Activated B cell treated with CpG ODN at 0.5 μM for 24 hours (primary cell): ENCODE measurements at regions of chr18 and their contacts with region 1.

Region 1: DNA sequence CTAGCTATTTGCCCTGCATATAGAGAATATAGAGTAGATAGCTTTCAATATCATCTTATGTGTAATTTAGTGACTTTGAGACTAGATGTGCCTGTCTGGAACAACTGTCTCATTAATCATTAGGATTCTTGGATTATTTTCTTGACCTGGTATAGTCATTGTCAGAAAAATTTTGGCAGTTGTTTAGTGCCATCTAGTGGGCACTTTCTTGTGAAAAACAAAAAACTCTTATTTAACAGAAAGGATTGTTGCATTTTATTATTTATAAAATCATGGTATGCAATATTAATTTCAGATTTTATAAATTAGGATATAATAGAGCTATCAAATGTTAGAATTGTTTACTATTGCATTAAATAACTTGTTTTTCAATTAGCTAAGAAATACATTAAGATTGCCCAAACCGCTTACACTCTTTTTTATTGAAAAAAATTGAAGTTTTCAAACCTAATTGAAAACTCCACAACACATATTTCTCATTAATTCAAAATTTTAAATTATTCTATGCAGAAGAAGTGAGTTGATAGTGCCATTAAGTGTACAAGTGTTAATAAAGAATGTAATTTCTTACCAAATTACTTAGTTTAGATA is 80.3 kb downstream of the DYNAP start:
- DNase-seq: no peak
- ATAC-seq: no peak
- H3K4me3 Mint-ChIP-seq: no peak overlapping the region
- H3K27ac Mint-ChIP-seq: no peak overlapping the region
- H3K4me1 Mint-ChIP-seq: no peaks in the 10 kb centered on the region
- H3K27me3 Mint-ChIP-seq: peaks cover 3% of the 10 kb centered on the region
- CTCF ChIP-seq: no peak

Region 2: GRCh38 chr18:53567929-53568574 is 1103.3 kb before region 1 on chr18:
- CTCF ChIA-PET with region 1: interaction called, 7 read pairs
- POLR2A ChIA-PET with region 1: no interaction called
- intact Hi-C with region 1: loop called (anchors 1 kb)
- DNase-seq: no peak
- ATAC-seq: no peak
- H3K4me3 Mint-ChIP-seq: no peak overlapping the region
- H3K27ac Mint-ChIP-seq: no peak overlapping the region
- H3K4me1 Mint-ChIP-seq: no peaks in the 10 kb centered on the region
- H3K27me3 Mint-ChIP-seq: no peaks in the 10 kb centered on the region
- CTCF ChIP-seq: peak; percentile 40

Region 3: DNA sequence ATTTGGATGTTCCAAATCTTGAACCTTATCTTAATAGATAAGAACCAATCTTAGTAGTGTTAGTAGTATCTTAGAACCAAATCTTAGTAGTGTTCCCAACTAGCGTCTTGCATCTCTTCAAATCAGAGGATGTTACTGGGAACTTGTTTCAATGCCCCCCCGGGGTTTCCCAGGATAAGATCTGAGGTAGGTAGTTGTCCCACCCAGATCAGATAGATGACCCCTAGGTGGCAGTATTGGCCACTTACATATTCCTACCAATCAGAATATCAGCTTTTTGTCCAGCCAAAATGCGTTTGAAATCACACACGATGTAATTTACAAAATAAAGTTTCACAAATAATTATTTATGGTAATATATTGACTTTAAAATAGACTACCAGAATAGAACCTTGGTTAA is 761.7 kb before region 1 on chr18:
- CTCF ChIA-PET with region 1: no interaction called
- POLR2A ChIA-PET with region 1: no interaction called
- intact Hi-C with region 1: loop called (anchors 2 kb)
- DNase-seq: no peak
- ATAC-seq: no peak
- H3K4me3 Mint-ChIP-seq: no peak overlapping the region
- H3K27ac Mint-ChIP-seq: no peak overlapping the region
- H3K4me1 Mint-ChIP-seq: no peaks in the 10 kb centered on the region
- H3K27me3 Mint-ChIP-seq: no peaks in the 10 kb centered on the region
- CTCF ChIP-seq: no peak

Region 4: DNA sequence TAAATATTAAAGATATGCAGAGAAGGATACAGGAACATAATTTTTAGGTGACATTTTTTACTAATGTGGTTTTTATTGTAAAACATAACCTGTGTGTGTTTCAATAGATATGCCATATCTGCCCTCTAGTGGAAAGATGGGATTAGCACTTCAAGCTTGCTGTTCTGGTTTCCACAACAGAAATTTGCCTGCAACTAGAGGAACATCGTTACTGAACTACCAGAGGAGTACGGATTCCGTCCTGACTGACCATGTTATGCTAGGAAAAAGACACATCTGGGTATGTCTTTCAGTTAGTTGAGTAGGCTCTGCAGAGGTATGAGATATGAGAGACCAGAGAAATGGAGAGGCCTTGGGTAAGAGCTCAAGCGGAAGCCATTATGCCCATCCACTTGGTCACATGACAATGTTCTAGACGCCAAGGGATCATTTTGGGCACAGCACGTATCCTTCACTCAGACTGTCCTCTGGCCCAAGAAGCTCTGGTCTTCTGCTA is 551.8 kb before region 1 on chr18:
- CTCF ChIA-PET with region 1: no interaction called
- POLR2A ChIA-PET with region 1: no interaction called
- intact Hi-C with region 1: loop called (anchors 1 kb)
- DNase-seq: no peak
- ATAC-seq: peak; percentile 37
- H3K4me3 Mint-ChIP-seq: peak overlapping the region; percentile 65
- H3K27ac Mint-ChIP-seq: no peak overlapping the region
- H3K4me1 Mint-ChIP-seq: peaks cover 4% of the 10 kb centered on the region
- H3K27me3 Mint-ChIP-seq: peaks cover 17% of the 10 kb centered on the region
- CTCF ChIP-seq: peak; percentile 62

Region 5: GRCh38 chr18:54357660-54358494 is 313.5 kb before region 1 on chr18 and contains the starts of genes C18orf54 and STARD6:
- CTCF ChIA-PET with region 1: no interaction called
- POLR2A ChIA-PET with region 1: no interaction called
- intact Hi-C with region 1: loop called (anchors 1 kb)
- DNase-seq: peak; percentile 89
- ATAC-seq: peak; percentile 95
- H3K4me3 Mint-ChIP-seq: peak within 1 kb of the TSS; percentile 99
- H3K27ac Mint-ChIP-seq: peak within 1 kb of the TSS; percentile 93
- H3K4me1 Mint-ChIP-seq: peaks cover 15% of the 10 kb centered on the region
- H3K27me3 Mint-ChIP-seq: no peaks in the 10 kb centered on the region
- CTCF ChIP-seq: no peak
- total RNA-seq, gene C18orf54: 1.9 TPM in 2 replicates
- total RNA-seq, gene STARD6: not detected in 2 replicates

Region 6: GRCh38 chr18:54444319-54444914 is 227.0 kb before region 1 on chr18:
- CTCF ChIA-PET with region 1: interaction called, 3 read pairs
- POLR2A ChIA-PET with region 1: no interaction called
- intact Hi-C with region 1: loop called (anchors 1 kb)
- DNase-seq: no peak
- ATAC-seq: no peak
- H3K4me3 Mint-ChIP-seq: no peak overlapping the region
- H3K27ac Mint-ChIP-seq: no peak overlapping the region
- H3K4me1 Mint-ChIP-seq: no peaks in the 10 kb centered on the region
- H3K27me3 Mint-ChIP-seq: peaks cover 20% of the 10 kb centered on the region
- CTCF ChIP-seq: no peak

Region 7: GRCh38 chr18:54558609-54559585 is 112.5 kb before region 1 on chr18:
- CTCF ChIA-PET with region 1: interaction called, 4 read pairs
- POLR2A ChIA-PET with region 1: no interaction called
- intact Hi-C with region 1: loop called (anchors 2 kb)
- DNase-seq: no peak
- ATAC-seq: no peak
- H3K4me3 Mint-ChIP-seq: no peak overlapping the region
- H3K27ac Mint-ChIP-seq: no peak overlapping the region
- H3K4me1 Mint-ChIP-seq: no peaks in the 10 kb centered on the region
- H3K27me3 Mint-ChIP-seq: peaks cover 4% of the 10 kb centered on the region
- CTCF ChIP-seq: no peak